IMR-90 (cell line): ENCODE measurements at regions of chr5 and their contacts with region 1.

Region 1: GRCh38 chr5:119435436-119436132 is 16.7 kb upstream of the HSD17B4 start:
- DNase-seq: peak; percentile 52
- ATAC-seq: peak; percentile 80
- H3K4me3 ChIP-seq: no peak overlapping the region
- H3K27ac ChIP-seq: no peak overlapping the region
- H3K4me1 ChIP-seq: no peaks in the 10 kb centered on the region
- H3K27me3 ChIP-seq: peaks cover 5% of the 10 kb centered on the region; the same call in 1 of the 2 replicates
- CTCF ChIP-seq: peak; percentile 67
- POLR2A ChIP-seq: no peak
- RAD21 ChIP-seq: peak; percentile 62

Region 2: GRCh38 chr5:118873417-118873816 is 562.2 kb before region 1 on chr5:
- CTCF ChIA-PET with region 1: no interaction called
- POLR2A ChIA-PET with region 1: no interaction called
- dilution Hi-C with region 1: no loop called
- in situ Hi-C with region 1: no loop called
- intact Hi-C with region 1: no loop called
- DNase-seq: no peak
- ATAC-seq: no peak
- H3K4me3 ChIP-seq: no peak overlapping the region
- H3K27ac ChIP-seq: no peak overlapping the region
- H3K4me1 ChIP-seq: no peaks in the 10 kb centered on the region
- H3K27me3 ChIP-seq: no peaks in the 10 kb centered on the region
- CTCF ChIP-seq: no peak
- POLR2A ChIP-seq: no peak
- RAD21 ChIP-seq: no peak

Region 3: GRCh38 chr5:118956727-118957126 is 478.9 kb before region 1 on chr5:
- CTCF ChIA-PET with region 1: no interaction called
- POLR2A ChIA-PET with region 1: no interaction called
- dilution Hi-C with region 1: no loop called
- in situ Hi-C with region 1: no loop called
- intact Hi-C with region 1: no loop called
- DNase-seq: peak; percentile 22
- ATAC-seq: peak; percentile 60
- H3K4me3 ChIP-seq: no peak overlapping the region
- H3K27ac ChIP-seq: no peak overlapping the region
- H3K4me1 ChIP-seq: no peaks in the 10 kb centered on the region
- H3K27me3 ChIP-seq: no peaks in the 10 kb centered on the region
- CTCF ChIP-seq: peak; percentile 51
- POLR2A ChIP-seq: no peak
- RAD21 ChIP-seq: peak; percentile 62

Region 4: DNA sequence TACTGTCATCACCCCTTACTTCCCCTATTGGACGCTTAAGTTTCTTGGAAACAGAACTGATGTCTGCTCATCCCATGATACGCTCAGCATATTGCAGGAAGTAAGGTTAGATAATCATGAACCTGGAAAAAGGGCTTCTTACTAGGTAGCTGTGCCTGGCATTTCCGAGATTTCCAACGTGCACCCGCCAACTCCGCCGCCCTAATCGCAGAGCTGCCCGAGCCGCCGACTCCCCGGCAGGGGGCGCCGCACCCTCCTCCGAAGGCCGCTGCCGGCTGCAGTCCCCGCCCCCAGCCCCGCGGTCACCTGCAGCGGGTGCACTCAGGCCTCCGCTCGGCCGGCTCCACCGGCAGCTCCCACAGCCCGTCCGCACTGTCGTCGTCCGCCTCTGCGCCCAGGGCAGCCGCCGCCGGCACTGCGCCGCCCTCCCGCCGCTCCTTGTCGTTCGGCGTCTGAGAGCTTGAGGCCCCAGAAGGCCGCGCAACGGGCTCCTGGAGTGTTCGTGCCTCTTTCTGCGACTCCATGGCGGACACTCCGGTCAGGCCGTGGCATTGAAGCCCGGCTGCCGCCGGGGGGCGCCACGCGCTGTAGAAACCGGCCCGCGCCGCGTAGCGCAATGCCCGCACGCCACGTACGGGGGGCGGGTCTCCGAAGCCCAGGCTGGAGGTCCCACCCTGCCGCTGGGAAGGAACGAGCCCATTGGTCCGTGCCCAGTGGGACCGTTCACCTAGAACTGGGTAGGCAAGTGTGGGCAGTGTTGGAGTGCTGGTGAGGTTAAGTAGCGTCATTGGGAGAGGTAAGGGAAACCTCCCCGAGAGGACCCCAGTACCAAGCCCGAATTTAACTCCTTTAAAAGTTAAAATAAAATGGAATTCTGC is 447.4 kb before region 1 on chr5 and contains the start of gene DTWD2:
- CTCF ChIA-PET with region 1: interaction called, 4 read pairs
- POLR2A ChIA-PET with region 1: no interaction called
- dilution Hi-C with region 1: no loop called
- in situ Hi-C with region 1: no loop called
- intact Hi-C with region 1: loop called (anchors 1 kb)
- DNase-seq: peak; percentile 88
- ATAC-seq: peak; percentile 98
- H3K4me3 ChIP-seq: peak within 1 kb of the TSS; percentile 66
- H3K27ac ChIP-seq: peak within 1 kb of the TSS; percentile 66
- H3K4me1 ChIP-seq: no peaks in the 10 kb centered on the region
- H3K27me3 ChIP-seq: no peaks in the 10 kb centered on the region
- CTCF ChIP-seq: peak; percentile 93
- POLR2A ChIP-seq: no peak
- RAD21 ChIP-seq: peak; percentile 82
- total RNA-seq, gene DTWD2: 1.8 and 2.5 TPM in 2 replicates

Region 5: GRCh38 chr5:119022017-119022745 is 413.4 kb before region 1 on chr5:
- CTCF ChIA-PET with region 1: no interaction called
- POLR2A ChIA-PET with region 1: no interaction called
- dilution Hi-C with region 1: no loop called
- in situ Hi-C with region 1: no loop called
- intact Hi-C with region 1: loop called (anchors 1 kb)
- DNase-seq: peak; percentile 57
- ATAC-seq: peak; percentile 80
- H3K4me3 ChIP-seq: no peak overlapping the region
- H3K27ac ChIP-seq: no peak overlapping the region
- H3K4me1 ChIP-seq: no peaks in the 10 kb centered on the region
- H3K27me3 ChIP-seq: no peaks in the 10 kb centered on the region
- CTCF ChIP-seq: peak; percentile 66
- POLR2A ChIP-seq: no peak
- RAD21 ChIP-seq: peak; percentile 80

Region 6: DNA sequence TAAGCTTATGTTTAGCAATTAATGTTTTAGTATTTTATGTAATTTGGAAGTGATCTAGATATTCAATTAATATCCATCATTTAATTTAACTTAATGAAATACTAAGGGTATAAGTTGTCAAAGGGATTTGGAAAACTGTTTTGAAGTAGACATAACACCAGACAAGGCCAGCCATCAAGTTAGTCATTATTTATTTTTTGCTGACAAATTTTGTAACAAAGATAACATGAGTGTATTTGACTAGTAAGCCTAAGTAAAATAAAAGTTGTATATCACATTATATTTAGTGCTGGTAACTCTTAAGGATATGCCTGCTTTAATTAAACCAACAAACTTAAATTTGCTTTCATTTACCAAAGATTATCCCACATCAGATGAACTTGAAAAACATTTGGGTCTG is 205.6 kb before region 1 on chr5:
- CTCF ChIA-PET with region 1: no interaction called
- POLR2A ChIA-PET with region 1: no interaction called
- dilution Hi-C with region 1: no loop called
- in situ Hi-C with region 1: no loop called
- intact Hi-C with region 1: no loop called
- DNase-seq: no peak
- ATAC-seq: no peak
- H3K4me3 ChIP-seq: no peak overlapping the region
- H3K27ac ChIP-seq: no peak overlapping the region
- H3K4me1 ChIP-seq: no peaks in the 10 kb centered on the region
- H3K27me3 ChIP-seq: no peaks in the 10 kb centered on the region
- CTCF ChIP-seq: no peak
- POLR2A ChIP-seq: no peak
- RAD21 ChIP-seq: no peak

Region 7: DNA sequence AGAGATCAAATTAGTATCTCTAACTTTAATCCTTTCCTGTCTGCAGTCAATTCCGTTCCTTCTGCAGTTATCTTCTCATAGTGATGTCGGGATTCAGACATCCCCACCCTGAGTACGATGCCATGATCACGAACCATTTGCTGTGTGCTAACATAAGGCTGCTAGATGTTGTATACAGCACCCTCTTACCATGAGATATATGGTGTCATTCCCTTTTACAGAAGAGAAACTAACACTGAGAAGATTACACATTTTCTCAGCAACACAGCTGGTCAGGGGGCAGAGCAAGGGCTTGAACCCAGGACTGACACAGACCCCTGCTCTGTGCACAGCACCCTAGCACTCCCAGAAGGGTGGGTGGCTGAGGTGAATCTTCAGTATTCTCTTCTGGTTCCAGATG is 30.2 kb before region 1 on chr5:
- CTCF ChIA-PET with region 1: no interaction called
- POLR2A ChIA-PET with region 1: no interaction called
- dilution Hi-C with region 1: no loop called
- in situ Hi-C with region 1: no loop called
- intact Hi-C with region 1: no loop called
- DNase-seq: no peak
- ATAC-seq: no peak
- H3K4me3 ChIP-seq: no peak overlapping the region
- H3K27ac ChIP-seq: no peak overlapping the region
- H3K4me1 ChIP-seq: 0 out of 2 replicates have a peak, but pooled peaks cover 1% of the 10 kb centered on the region
- H3K27me3 ChIP-seq: peaks cover 7% of the 10 kb centered on the region
- CTCF ChIP-seq: no peak
- POLR2A ChIP-seq: no peak
- RAD21 ChIP-seq: no peak